Activated T-helper 1 cell treated with anti-CD3 and anti-CD28 coated beads, Interleukin-12 subunit alpha, Interleukin-12 subunit beta, Interleukin-2, Interleukin-4 antibody, amounts not matched to agents 30 ng/mL and 10 ng/mL and 1 ng/mL, durations not matched to agents 14 hours and 24 hours and 36 hours (primary cell): ENCODE measurements at regions of chr11 and their contacts with region 1.

Region 1: DNA sequence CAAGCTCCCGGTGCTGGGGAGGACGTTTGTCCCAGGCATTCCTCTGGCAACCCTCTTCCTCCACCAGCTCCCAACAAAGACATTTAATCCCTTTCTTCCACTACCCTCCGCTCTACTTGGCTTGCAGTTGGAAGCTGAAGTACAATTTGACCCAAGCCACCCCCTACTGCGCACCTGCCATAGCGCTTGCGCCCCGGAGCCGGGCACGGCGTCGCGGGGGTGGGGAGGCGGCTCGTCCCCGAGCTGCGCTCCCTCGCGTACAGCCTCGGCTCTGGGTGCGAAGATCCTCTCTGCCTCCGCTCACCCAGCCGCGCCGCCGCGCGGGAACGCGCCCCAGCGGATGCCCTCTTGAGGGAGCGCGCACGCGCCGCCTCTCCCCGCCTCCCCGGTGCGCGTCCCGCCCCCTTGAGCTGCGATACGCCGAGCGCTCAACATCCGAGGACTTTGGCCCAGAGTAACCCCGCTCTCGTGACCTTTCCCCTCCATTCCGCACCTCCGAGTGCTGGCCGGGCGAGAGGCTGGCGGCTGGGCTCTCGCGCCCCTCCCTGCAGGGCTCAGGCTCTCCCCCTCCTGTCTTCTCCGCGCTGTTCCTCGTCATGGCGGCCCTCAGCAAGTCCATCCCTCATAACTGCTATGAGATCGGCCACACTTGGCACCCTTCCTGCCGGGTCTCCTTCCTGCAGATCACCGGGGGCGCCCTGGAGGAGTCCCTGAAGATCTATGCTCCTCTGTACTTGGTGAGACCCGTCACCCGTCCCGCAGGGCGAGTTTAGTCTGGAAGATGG is at the start of gene TMEM135:
- DNase-seq: peak; percentile 93
- H3K4me3 Mint-ChIP-seq: peak within 1 kb of the TSS; percentile 98
- H3K27ac Mint-ChIP-seq: peak within 1 kb of the TSS; percentile 89
- H3K4me1 Mint-ChIP-seq: peaks cover 49% of the 10 kb centered on the region
- H3K27me3 Mint-ChIP-seq: peaks cover 17% of the 10 kb centered on the region
- total RNA-seq, gene TMEM135: 27.9 and 28.8 TPM in 2 replicates

Region 2: GRCh38 chr11:85759915-85760314 is 1277.7 kb before region 1 on chr11:
- intact Hi-C with region 1: loop called (anchors 10 kb)
- DNase-seq: no peak
- H3K4me3 Mint-ChIP-seq: no peak overlapping the region
- H3K27ac Mint-ChIP-seq: peak overlapping the region; percentile 7
- H3K4me1 Mint-ChIP-seq: peaks cover 90% of the 10 kb centered on the region
- H3K27me3 Mint-ChIP-seq: no peaks in the 10 kb centered on the region

Region 3: GRCh38 chr11:86671682-86672621 is 365.7 kb before region 1 on chr11 and contains the start of gene ME3:
- intact Hi-C with region 1: loop called (anchors 10 kb)
- DNase-seq: peak; percentile 47
- H3K4me3 Mint-ChIP-seq: peak within 1 kb of the TSS; percentile 83
- H3K27ac Mint-ChIP-seq: peak within 1 kb of the TSS; percentile 79
- H3K4me1 Mint-ChIP-seq: peaks cover 18% of the 10 kb centered on the region
- H3K27me3 Mint-ChIP-seq: peaks cover 31% of the 10 kb centered on the region
- total RNA-seq, gene ME3: 12.8 and 13.1 TPM in 2 replicates

Region 4: GRCh38 chr11:87081358-87081757 is 43.7 kb after region 1 on chr11:
- intact Hi-C with region 1: loop called (anchors 1 kb)
- DNase-seq: no peak
- H3K4me3 Mint-ChIP-seq: peak overlapping the region; percentile 78
- H3K27ac Mint-ChIP-seq: peak overlapping the region; percentile 87
- H3K4me1 Mint-ChIP-seq: peaks cover 32% of the 10 kb centered on the region
- H3K27me3 Mint-ChIP-seq: no peaks in the 10 kb centered on the region

Region 5: DNA sequence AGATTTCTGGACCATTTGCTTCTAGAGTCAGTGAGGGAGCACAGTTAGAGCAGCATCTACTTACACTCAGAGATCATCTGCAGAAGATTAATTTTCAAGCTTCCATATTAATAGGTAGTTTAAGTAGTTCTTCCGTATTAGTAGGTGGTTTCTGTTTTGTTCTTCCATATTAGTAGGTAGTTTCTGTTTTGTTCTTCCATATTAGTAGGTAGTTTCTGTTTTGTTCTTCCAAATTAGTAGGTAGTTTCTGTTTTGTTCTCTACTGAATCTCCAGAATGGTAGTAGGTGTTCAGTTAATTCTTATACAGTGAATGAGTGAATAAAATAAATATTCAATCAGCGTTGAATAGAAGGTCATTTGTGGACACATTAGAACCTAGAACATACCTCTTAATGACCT is 175.8 kb after region 1 on chr11:
- intact Hi-C with region 1: loop called (anchors 5 kb)
- DNase-seq: no peak
- H3K4me3 Mint-ChIP-seq: no peak overlapping the region
- H3K27ac Mint-ChIP-seq: no peak overlapping the region
- H3K4me1 Mint-ChIP-seq: peaks cover 10% of the 10 kb centered on the region
- H3K27me3 Mint-ChIP-seq: no peaks in the 10 kb centered on the region

Region 6: GRCh38 chr11:87290304-87290922 is 252.8 kb after region 1 on chr11:
- intact Hi-C with region 1: loop called (anchors 2 kb)
- DNase-seq: no peak
- H3K4me3 Mint-ChIP-seq: no peak overlapping the region
- H3K27ac Mint-ChIP-seq: no peak overlapping the region
- H3K4me1 Mint-ChIP-seq: no peaks in the 10 kb centered on the region
- H3K27me3 Mint-ChIP-seq: no peaks in the 10 kb centered on the region